PC-3 (cell line): ENCODE measurements at regions of chr9 and their contacts with region 1.

Region 1: GRCh38 chr9:109469646-109470358 is 28.3 kb downstream of the PTPN3 start:
- DNase-seq: peak; percentile 80
- ATAC-seq: peak; percentile 95
- H3K4me3 ChIP-seq: no peak overlapping the region
- H3K27ac ChIP-seq: no peak overlapping the region
- H3K4me1 ChIP-seq: peaks cover 19% of the 10 kb centered on the region; the same call in 1 of the 2 replicates
- H3K27me3 ChIP-seq: no peaks in the 10 kb centered on the region
- CTCF ChIP-seq: peak; percentile 83

Region 2: DNA sequence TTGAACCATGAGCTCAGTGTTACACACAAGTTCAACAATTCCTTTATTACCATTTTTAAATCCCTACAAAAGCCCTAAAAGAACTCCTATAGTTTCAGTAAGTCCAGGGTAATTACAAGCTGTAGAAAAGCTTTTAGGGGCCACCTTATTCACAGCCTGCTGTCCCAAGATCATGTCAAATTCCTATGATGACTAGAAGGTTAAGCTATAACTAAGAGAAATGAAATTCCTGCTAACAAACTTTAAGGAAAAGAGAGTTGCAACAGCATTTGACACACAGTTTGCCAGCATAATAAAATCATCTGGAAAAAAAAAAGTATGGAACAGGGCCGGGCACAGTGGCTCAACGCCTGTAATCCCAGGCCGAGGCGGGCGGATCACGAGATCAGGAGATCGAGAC is 381.6 kb before region 1 on chr9:
- CTCF ChIA-PET with region 1: no interaction called
- POLR2A ChIA-PET with region 1: no interaction called
- intact Hi-C with region 1: no loop called
- DNase-seq: no peak
- ATAC-seq: no peak
- H3K4me3 ChIP-seq: no peak overlapping the region
- H3K27ac ChIP-seq: no peak overlapping the region
- H3K4me1 ChIP-seq: peaks cover 3% of the 10 kb centered on the region; the same call in 1 of the 2 replicates
- H3K27me3 ChIP-seq: no peaks in the 10 kb centered on the region
- CTCF ChIP-seq: no peak

Region 3: GRCh38 chr9:109440797-109441287 is 29.0 kb before region 1 on chr9:
- CTCF ChIA-PET with region 1: interaction called, 17 read pairs
- POLR2A ChIA-PET with region 1: interaction called, 4 read pairs
- intact Hi-C with region 1: loop called (anchors 1 kb)
- DNase-seq: peak; percentile 80
- ATAC-seq: peak; percentile 84
- H3K4me3 ChIP-seq: no peak overlapping the region
- H3K27ac ChIP-seq: 0 out of 2 replicates have a peak overlapping the region, but pooled peaks have one; percentile 10
- H3K4me1 ChIP-seq: no peaks in the 10 kb centered on the region; the same call in 1 of the 2 replicates
- H3K27me3 ChIP-seq: no peaks in the 10 kb centered on the region
- CTCF ChIP-seq: peak; percentile 76

Region 4: DNA sequence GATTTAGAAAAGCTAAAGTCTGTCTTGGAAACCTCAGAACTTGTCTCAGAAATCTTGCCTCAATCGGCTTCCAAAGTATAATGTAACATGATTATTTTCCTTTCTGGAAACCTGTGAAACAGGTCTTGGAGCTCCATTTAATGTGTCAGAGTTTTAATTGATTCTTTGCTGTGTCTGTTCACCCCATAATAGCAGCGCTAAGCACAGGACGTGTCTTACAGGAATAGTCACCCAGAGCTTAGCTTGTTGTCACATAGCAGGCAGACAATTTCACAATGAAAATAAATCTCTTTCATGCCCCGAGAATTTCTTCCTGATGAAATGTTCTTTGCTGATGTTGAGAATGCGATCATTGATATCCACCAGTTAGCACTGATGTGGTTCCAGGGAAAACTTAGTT is 68.5 kb after region 1 on chr9:
- CTCF ChIA-PET with region 1: no interaction called
- POLR2A ChIA-PET with region 1: no interaction called
- intact Hi-C with region 1: no loop called
- DNase-seq: peak; percentile 57
- ATAC-seq: no peak
- H3K4me3 ChIP-seq: no peak overlapping the region
- H3K27ac ChIP-seq: no peak overlapping the region
- H3K4me1 ChIP-seq: no peaks in the 10 kb centered on the region
- H3K27me3 ChIP-seq: no peaks in the 10 kb centered on the region
- CTCF ChIP-seq: no peak